ENCODE measurements at regions of chr4 and their contacts with region 1.

Region 1: GRCh38 chr4:139301113-139301820 is at the start of gene NAA15:
- DNase-seq: peak; percentile 90
- ATAC-seq: peak; percentile 91
- H3K4me3 ChIP-seq: peak within 1 kb of the TSS; percentile 89
- H3K27ac ChIP-seq: peak within 1 kb of the TSS; percentile 92
- H3K4me1 ChIP-seq: peaks cover 13% of the 10 kb centered on the region; the same call in 1 of the 2 replicates
- H3K27me3 ChIP-seq: no peaks in the 10 kb centered on the region
- CTCF ChIP-seq: no peak
- EP300 ChIP-seq: peak in 1 of 2 experiments; percentile 53; a peak in 2 of 4 replicates
- POLR2A ChIP-seq: peak; percentile 80
- RAD21 ChIP-seq: no peak
- polyA plus RNA-seq, gene NAA15: 24.3 to 29.7 TPM

Region 2: GRCh38 chr4:138199568-138200235 is 1101.6 kb before region 1 on chr4:
- CTCF ChIA-PET with region 1: no interaction called
- POLR2A ChIA-PET with region 1: no interaction called
- RAD21 ChIA-PET with region 1: no interaction called
- SMC1A ChIA-PET with region 1: no interaction called
- in situ Hi-C with region 1: loop called (anchors 25 kb)
- intact Hi-C with region 1: no loop called
- DNase-seq: no peak
- ATAC-seq: peak; percentile 89
- H3K4me3 ChIP-seq: peak overlapping the region; percentile 53; the same call in 1 of the 2 replicates
- H3K27ac ChIP-seq: peak overlapping the region; percentile 74
- H3K4me1 ChIP-seq: peaks cover 3% of the 10 kb centered on the region; the same call in 1 of the 2 replicates
- H3K27me3 ChIP-seq: no peaks in the 10 kb centered on the region
- CTCF ChIP-seq: no peak
- EP300 ChIP-seq: no peak
- POLR2A ChIP-seq: no peak
- RAD21 ChIP-seq: no peak

Region 3: DNA sequence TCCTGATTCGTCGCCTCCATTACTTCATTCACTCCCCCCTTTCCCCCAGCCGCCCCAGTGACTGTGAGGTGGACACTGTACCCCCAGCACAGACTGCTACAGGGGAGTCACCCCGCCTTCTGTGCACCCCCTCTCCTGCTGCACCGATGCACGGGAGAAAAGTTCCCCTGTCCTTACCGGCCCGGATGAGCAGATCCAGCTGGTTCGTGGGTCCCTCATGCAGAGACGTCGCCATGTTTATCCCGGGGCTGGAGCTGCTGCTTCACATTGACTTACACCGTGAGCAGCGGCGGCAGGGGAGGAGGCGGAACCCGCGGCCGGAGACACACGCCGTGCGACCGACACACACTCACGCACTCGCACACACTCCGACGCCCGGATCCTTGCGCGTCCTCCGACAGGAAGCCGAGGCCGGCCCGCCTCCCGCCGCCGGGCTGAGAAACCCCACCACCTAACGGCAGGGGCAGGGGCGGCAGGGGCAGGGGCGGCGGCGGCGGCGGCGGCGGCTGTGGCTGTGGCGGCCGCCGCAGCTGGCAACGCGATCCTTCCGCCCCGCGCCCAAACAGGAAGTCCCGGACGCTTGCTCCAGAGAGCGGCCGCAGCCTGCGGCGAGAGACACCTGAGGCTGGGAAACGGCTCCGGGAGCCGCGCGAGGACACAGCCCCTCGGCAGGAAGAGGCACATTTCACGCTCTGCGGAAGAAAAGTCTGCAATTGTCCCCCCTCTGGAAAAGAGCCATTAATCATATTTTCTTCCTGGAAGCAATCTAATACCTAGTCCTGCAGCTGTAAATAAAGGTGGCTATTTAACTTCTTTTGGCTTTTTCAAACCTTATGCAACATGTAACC is 217.1 kb before region 1 on chr4:
- CTCF ChIA-PET with region 1: interaction called, 8 read pairs
- POLR2A ChIA-PET with region 1: interaction called, 7 read pairs
- RAD21 ChIA-PET with region 1: interaction called, 5 read pairs
- SMC1A ChIA-PET with region 1: interaction called, 10 read pairs
- in situ Hi-C with region 1: no loop called
- intact Hi-C with region 1: loop called (anchors 5 kb)
- DNase-seq: peak; percentile 62
- ATAC-seq: peak; percentile 77
- H3K4me3 ChIP-seq: peak overlapping the region; percentile 77
- H3K27ac ChIP-seq: peak overlapping the region; percentile 97
- H3K4me1 ChIP-seq: no peaks in the 10 kb centered on the region
- H3K27me3 ChIP-seq: no peaks in the 10 kb centered on the region
- CTCF ChIP-seq: 0 out of 6 replicates have a peak, but pooled peaks of 2 of the 3 experiments have one; percentile 2 to 32
- EP300 ChIP-seq: no peak
- POLR2A ChIP-seq: peak; percentile 87
- RAD21 ChIP-seq: no peak

Region 4: DNA sequence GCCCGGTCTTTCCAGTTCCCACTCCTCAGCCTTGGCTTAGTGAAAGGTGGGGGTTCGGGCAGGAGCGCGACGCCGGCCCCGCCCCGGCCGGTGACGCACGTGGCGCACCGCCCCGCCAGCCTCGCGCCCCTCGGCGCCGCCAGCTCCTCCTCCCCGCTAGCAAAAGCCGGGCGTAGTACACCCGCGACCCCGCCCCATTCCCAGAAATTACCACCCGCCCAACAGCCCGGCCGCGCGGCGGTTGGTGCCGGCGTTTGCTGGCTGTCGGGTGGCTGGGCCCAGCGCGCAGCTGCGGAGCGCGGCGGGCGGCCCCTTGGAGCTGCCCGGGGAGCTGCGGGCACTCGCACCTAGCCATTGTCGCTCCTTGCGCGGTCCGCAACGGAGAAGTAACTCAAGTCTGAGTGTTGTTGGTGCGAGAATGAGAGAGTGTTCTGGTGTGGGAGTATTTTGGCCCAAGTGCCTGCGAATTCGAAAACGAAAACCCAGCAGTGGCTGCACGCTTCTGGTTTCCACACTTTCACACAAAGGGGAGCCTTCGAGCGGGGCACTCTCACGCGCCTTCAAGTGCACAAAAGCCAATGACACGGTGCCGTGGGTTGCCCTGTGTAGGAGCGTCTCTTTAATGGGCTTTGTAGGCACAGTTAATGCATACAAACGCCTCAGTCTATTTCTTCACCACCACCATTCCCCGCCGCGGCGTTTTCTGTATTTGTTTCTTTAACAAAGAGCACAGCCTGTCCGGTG is 123.2 kb before region 1 on chr4:
- CTCF ChIA-PET with region 1: interaction called, 4 read pairs
- POLR2A ChIA-PET with region 1: interaction called, 20 read pairs
- RAD21 ChIA-PET with region 1: interaction called, 9 read pairs
- SMC1A ChIA-PET with region 1: interaction called, 13 read pairs
- in situ Hi-C with region 1: no loop called
- intact Hi-C with region 1: no loop called
- DNase-seq: peak; percentile 48
- ATAC-seq: peak; percentile 74
- H3K4me3 ChIP-seq: peak overlapping the region; percentile 79
- H3K27ac ChIP-seq: peak overlapping the region; percentile 57
- H3K4me1 ChIP-seq: peaks cover 4% of the 10 kb centered on the region; the same call in 1 of the 2 replicates
- H3K27me3 ChIP-seq: peaks cover 2 to 3% of the 10 kb centered on the region in 2 experiments; a peak in 2 of 4 replicates
- CTCF ChIP-seq: no peak
- EP300 ChIP-seq: peak; percentile 13 to 32; a peak in 1 of 4 replicates
- POLR2A ChIP-seq: peak; percentile 81
- RAD21 ChIP-seq: no peak

Region 5: GRCh38 chr4:139315221-139315675 is 14.0 kb after region 1 on chr4:
- CTCF ChIA-PET with region 1: interaction called, 20 read pairs
- POLR2A ChIA-PET with region 1: interaction called, 29 read pairs
- RAD21 ChIA-PET with region 1: interaction called, 13 read pairs
- SMC1A ChIA-PET with region 1: interaction called, 15 read pairs
- in situ Hi-C with region 1: no loop called
- intact Hi-C with region 1: loop called (anchors 1 kb)
- DNase-seq: peak; percentile 45
- ATAC-seq: peak; percentile 82
- H3K4me3 ChIP-seq: peak overlapping the region; percentile 39; the same call in 1 of the 2 replicates
- H3K27ac ChIP-seq: peak overlapping the region; percentile 29
- H3K4me1 ChIP-seq: peaks cover 20% of the 10 kb centered on the region
- H3K27me3 ChIP-seq: no peaks in the 10 kb centered on the region
- CTCF ChIP-seq: no peak
- EP300 ChIP-seq: no peak
- POLR2A ChIP-seq: no peak
- RAD21 ChIP-seq: no peak

Region 6: GRCh38 chr4:139331185-139331584 is 29.9 kb after region 1 on chr4:
- CTCF ChIA-PET with region 1: interaction called, 18 read pairs
- POLR2A ChIA-PET with region 1: interaction called, 9 read pairs
- RAD21 ChIA-PET with region 1: interaction called, 17 read pairs
- SMC1A ChIA-PET with region 1: interaction called, 25 read pairs
- in situ Hi-C with region 1: no loop called
- intact Hi-C with region 1: no loop called
- DNase-seq: no peak
- ATAC-seq: peak; percentile 44
- H3K4me3 ChIP-seq: no peak overlapping the region
- H3K27ac ChIP-seq: no peak overlapping the region
- H3K4me1 ChIP-seq: peaks cover 12% of the 10 kb centered on the region; the same call in 1 of the 2 replicates
- H3K27me3 ChIP-seq: no peaks in the 10 kb centered on the region
- CTCF ChIP-seq: no peak
- EP300 ChIP-seq: no peak
- POLR2A ChIP-seq: no peak
- RAD21 ChIP-seq: no peak

Region 7: DNA sequence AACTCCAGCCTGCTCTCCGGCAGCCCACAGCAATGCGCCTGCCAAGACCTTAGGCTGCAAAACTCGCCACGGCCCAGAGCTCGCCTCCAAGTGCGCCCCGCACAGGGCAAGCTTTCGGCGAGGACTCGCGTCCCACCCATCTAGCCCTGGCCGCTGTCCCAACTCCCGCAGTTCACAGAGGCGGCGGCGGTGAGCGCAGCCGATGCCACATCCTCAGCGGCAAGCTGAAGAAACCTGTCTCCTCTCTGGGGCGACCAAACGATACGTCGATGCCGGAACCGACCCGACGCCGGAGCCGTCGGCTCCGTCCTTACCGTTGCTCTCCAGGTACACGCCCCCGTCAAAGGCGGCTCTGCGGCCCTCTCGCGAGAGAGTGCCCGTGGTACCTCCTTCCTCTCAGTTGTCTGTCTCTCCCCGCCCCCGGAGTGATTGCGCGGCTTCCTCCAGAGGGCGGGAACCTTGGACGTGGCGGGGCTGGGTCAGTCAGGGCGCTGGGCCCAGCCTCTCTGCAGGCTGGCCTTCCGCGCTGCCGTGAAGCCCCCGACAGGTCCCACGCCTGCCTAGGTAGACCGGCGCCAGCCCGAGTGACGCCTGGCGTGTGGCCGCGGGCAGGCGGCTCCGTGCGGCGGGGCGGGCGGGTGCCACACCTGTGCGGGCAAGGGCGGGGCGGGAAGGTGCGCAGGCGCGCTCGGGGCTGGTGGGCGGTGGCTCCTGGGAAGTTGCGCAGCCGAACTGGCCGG is 152.3 kb after region 1 on chr4:
- CTCF ChIA-PET with region 1: no interaction called
- POLR2A ChIA-PET with region 1: interaction called, 3 read pairs
- RAD21 ChIA-PET with region 1: interaction called, 6 read pairs
- SMC1A ChIA-PET with region 1: interaction called, 3 read pairs
- in situ Hi-C with region 1: no loop called
- intact Hi-C with region 1: loop called (anchors 10 kb)
- DNase-seq: peak; percentile 90
- ATAC-seq: peak; percentile 91
- H3K4me3 ChIP-seq: peak overlapping the region; percentile 82
- H3K27ac ChIP-seq: peak overlapping the region; percentile 78
- H3K4me1 ChIP-seq: peaks cover 12% of the 10 kb centered on the region
- H3K27me3 ChIP-seq: no peaks in the 10 kb centered on the region
- CTCF ChIP-seq: peak in 1 of 3 experiments; percentile 0; a peak in 1 of 6 replicates
- EP300 ChIP-seq: no peak; a peak in 1 of 4 replicates
- POLR2A ChIP-seq: peak; percentile 91
- RAD21 ChIP-seq: no peak

Measured in GM12878 (cell line).